ENCODE measurements at regions of chr11 and their contacts with region 1.

Region 1: GRCh38 chr11:34492806-34493414 is 20.7 kb downstream of the ELF5 start:
- DNase-seq: no peak
- ATAC-seq: no peak
- H3K4me3 Mint-ChIP-seq: no peak overlapping the region
- H3K27ac Mint-ChIP-seq: no peak overlapping the region
- H3K4me1 Mint-ChIP-seq: no peaks in the 10 kb centered on the region
- H3K27me3 Mint-ChIP-seq: peaks cover 5% of the 10 kb centered on the region
- CTCF ChIP-seq: peak; percentile 65

Region 2: DNA sequence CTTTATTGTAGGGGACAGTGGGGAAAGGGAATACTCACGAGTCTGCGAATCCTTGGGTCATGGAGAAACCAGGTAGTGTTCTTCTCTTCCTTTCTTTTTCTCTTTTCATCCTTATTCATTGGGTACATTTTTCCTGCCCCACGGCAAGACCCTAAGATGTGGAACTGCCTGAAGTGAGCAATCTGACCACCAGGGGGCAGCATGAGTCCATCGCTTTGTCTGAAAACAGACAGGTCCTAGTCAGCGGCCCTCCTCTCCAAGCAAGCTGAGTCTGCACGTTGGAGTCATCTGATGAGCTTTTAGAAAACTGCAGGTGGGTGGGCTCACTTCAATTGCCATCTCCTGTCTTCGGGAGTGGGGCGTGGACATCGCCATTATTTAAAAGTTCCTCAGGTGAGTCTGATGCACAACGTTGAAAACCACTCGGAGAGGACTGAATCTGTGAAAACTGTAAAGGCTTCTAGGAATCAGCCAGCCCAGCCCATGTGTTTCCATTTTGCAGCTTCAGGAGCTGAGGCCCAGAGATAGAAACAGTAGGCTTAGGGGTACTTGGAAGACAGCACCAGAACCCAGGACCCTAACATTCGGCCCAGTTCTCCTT is 684.6 kb before region 1 on chr11:
- CTCF ChIA-PET with region 1: interaction called, 4 read pairs
- POLR2A ChIA-PET with region 1: no interaction called
- intact Hi-C with region 1: loop called (anchors 1 kb)
- DNase-seq: peak; percentile 76
- ATAC-seq: peak; percentile 91
- H3K4me3 Mint-ChIP-seq: no peak overlapping the region
- H3K27ac Mint-ChIP-seq: no peak overlapping the region
- H3K4me1 Mint-ChIP-seq: no peaks in the 10 kb centered on the region
- H3K27me3 Mint-ChIP-seq: peaks cover 6% of the 10 kb centered on the region
- CTCF ChIP-seq: peak; percentile 95